ENCODE measurements at regions of chr22 and their contacts with region 1.

Region 1: DNA sequence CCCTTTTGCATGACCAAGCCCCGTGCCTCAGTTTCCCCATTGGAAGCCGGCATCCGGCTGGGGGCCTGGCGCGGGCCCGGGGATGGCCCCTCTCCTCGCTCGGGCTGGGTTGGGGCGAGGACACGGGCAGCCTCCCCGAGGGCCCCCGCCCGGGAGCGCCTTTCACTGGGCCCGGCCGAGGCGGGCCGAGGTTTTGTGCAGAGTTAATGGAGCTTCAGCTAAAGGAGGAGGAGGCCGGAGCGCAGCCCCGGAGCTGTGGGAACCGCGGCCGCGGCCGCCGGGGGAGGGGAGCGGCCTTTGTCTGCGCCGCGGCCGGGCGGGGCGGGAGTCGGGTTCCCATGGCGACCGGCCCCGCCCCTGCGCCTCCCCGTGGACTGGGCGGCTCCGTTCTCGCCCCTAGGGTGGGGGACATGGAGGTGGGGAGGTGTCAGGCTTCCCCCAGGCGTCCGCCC is 1.4 kb upstream of the MAPK11 start:
- DNase-seq: peak; percentile 80 to 84 (median 83)
- ATAC-seq: peak; percentile 82
- H3K4me3 ChIP-seq: peak overlapping the region; percentile 31
- H3K27ac ChIP-seq: no peak overlapping the region
- H3K4me1 ChIP-seq: peaks cover 7 to 77% of the 10 kb centered on the region in 2 experiments; a peak in 4 of 5 replicates
- H3K27me3 ChIP-seq: no peaks in the 10 kb centered on the region
- CTCF ChIP-seq: peak in 2 of 3 experiments; percentile 26 to 36; a peak in 3 of 6 replicates
- EP300 ChIP-seq: no peak
- POLR2A ChIP-seq: no peak
- RAD21 ChIP-seq: no peak

Region 2: DNA sequence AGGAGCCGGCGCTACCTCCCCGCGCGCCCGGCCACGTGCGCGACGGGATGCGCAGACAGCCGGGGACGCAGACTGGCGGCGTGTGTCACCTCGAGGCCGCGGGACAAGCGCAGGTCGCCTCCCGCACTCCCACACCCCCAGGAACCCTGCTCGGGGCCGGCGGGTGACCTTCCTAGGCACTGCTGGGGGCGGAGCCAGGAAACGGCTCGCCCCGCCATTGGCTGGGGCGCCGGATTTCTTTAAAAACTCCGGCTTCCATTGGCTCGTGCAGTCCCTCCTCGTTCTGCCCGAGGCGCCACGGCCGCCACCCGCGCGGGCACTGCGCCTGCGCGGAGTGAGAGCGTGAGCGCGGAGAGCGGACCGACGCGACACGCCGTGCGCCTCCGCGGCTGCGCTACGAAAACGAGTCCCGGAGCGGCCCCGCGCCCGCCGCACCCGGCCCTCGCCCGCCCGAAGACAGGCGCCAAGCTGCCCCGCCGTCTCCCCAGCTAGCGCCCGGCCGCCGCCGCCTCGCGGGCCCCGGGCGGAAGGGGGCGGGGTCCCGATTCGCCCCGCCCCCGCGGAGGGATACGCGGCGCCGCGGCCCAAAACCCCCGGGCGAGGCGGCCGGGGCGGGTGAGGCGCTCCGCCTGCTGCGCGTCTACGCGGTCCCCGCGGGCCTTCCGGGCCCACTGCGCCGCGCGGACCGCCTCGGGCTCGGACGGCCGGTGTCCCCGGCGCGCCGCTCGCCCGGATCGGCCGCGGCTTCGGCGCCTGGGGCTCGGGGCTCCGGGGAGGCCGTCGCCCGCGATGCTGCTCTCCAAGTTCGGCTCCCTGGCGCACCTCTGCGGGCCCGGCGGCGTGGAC is 311.2 kb before region 1 on chr22 and contains the start of gene PIM3:
- CTCF ChIA-PET with region 1: no interaction called
- POLR2A ChIA-PET with region 1: no interaction called
- in situ Hi-C with region 1: no loop called
- intact Hi-C with region 1: no loop called
- DNase-seq: peak; percentile 89 to 96 (median 92)
- ATAC-seq: peak; percentile 87
- H3K4me3 ChIP-seq: peak within 1 kb of the TSS; percentile 76
- H3K27ac ChIP-seq: peak within 1 kb of the TSS; percentile 94
- H3K4me1 ChIP-seq: peaks cover 20 to 86% of the 10 kb centered on the region in 2 experiments
- H3K27me3 ChIP-seq: no peaks in the 10 kb centered on the region
- CTCF ChIP-seq: no peak
- EP300 ChIP-seq: no peak
- POLR2A ChIP-seq: peak; percentile 75
- RAD21 ChIP-seq: no peak
- polyA plus RNA-seq, gene PIM3: 0.24 to 0.57 TPM

Region 3: GRCh38 chr22:50293441-50294318 is 22.1 kb after region 1 on chr22:
- CTCF ChIA-PET with region 1: no interaction called
- POLR2A ChIA-PET with region 1: no interaction called
- in situ Hi-C with region 1: no loop called
- intact Hi-C with region 1: no loop called
- DNase-seq: no peak
- ATAC-seq: no peak
- H3K4me3 ChIP-seq: no peak overlapping the region
- H3K27ac ChIP-seq: no peak overlapping the region
- H3K4me1 ChIP-seq: peaks cover 0 to 37% of the 10 kb centered on the region in 2 experiments; a peak in 2 of 5 replicates
- H3K27me3 ChIP-seq: no peaks in the 10 kb centered on the region
- CTCF ChIP-seq: no peak
- EP300 ChIP-seq: no peak
- POLR2A ChIP-seq: no peak
- RAD21 ChIP-seq: no peak

Region 4: DNA sequence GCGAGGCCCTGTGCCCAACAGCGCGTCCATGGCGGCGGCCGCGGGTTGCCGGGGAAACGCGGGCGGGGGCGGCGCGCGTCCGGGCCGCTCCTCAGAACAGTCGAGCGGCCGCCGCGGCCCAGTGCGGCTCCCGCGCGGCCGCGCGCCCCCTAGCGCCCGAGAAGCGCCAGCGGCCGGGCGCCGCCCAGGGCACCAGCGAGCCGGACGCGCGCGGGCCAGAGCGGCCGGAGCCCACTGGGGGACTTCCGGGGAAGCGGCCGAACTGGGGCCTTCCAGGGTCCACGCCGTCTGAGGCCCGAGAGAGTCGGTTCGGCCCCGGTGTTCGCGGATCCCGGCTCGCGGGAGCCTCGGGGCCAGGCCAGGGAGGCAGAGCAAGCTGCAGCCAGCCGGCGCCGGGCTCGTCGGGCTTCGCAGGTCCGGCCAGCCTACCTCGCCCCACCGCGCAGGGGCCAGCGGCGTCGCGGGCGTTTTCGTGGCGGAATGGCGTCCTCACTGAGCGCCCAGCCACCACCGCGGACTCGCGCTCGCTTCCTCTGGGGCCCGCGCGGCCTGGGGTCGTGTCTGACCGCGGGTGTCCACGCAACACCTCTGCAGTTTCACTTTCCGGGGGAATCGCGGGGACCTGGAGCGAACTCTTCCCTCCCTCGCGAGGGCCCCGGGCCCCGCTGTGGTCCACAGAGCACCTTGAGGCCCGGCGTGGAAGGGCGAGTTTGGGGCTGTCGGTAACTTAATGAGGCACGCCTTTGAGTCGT is 55.6 kb after region 1 on chr22 and contains the start of gene DENND6B:
- CTCF ChIA-PET with region 1: interaction called, 4 read pairs
- POLR2A ChIA-PET with region 1: interaction called, 3 read pairs
- in situ Hi-C with region 1: loop called (anchors 5 kb)
- intact Hi-C with region 1: loop called (anchors 5 kb)
- DNase-seq: peak; percentile 76 to 82 (median 79)
- ATAC-seq: peak; percentile 87
- H3K4me3 ChIP-seq: peak within 1 kb of the TSS; percentile 60
- H3K27ac ChIP-seq: peak within 1 kb of the TSS; percentile 88
- H3K4me1 ChIP-seq: peaks cover 2 to 28% of the 10 kb centered on the region in 2 experiments; a peak in 4 of 5 replicates
- H3K27me3 ChIP-seq: no peaks in the 10 kb centered on the region
- CTCF ChIP-seq: peak in 2 of 3 experiments; percentile 54 to 70; a peak in 4 of 6 replicates
- EP300 ChIP-seq: no peak
- POLR2A ChIP-seq: peak; percentile 72
- RAD21 ChIP-seq: peak in 1 of 2 experiments; percentile 68; a peak in 2 of 4 replicates
- polyA plus RNA-seq, gene DENND6B: 0.07 to 0.31 TPM

Region 5: DNA sequence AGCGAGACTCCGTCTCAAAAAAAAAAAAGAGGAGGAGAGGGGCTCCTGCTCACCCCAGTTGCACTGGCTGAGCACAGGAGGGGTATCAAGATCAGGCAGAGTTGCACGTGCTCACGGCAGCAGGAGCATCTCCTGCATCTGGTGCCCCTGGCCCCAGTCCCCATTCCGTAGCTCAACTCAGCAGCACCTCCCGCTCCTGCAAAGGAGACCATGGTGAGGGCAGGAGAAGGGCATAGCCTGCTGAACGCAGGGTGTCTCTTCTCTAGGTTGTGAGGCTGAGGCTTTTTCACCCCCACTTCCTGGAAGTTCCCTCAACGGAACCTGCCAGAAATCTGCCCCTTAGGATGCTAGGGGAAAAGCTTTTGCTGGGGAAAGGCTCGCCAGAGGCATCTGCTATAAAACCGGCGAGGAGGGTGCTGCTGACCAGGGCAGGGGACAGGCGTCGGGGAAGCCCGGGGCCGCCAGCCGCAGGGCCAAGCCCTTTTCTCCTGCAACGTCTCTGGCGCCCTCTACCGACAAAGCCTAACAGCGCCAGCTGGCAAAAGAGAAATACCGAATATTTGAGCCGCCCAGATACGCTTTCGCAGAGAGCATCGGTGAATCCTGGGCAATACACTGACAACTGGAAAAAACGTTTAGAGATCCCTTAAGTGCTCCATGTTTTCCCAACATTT is 70.6 kb after region 1 on chr22:
- CTCF ChIA-PET with region 1: interaction called, 8 read pairs
- POLR2A ChIA-PET with region 1: no interaction called
- in situ Hi-C with region 1: no loop called
- intact Hi-C with region 1: loop called (anchors 2 kb)
- DNase-seq: peak; percentile 58 to 89 (median 64)
- ATAC-seq: peak; percentile 89
- H3K4me3 ChIP-seq: peak overlapping the region; percentile 77
- H3K27ac ChIP-seq: peak overlapping the region; percentile 86
- H3K4me1 ChIP-seq: peaks cover 3 to 56% of the 10 kb centered on the region in 2 experiments; a peak in 4 of 5 replicates
- H3K27me3 ChIP-seq: no peaks in the 10 kb centered on the region
- CTCF ChIP-seq: peak; percentile 86 to 95 (median 90)
- EP300 ChIP-seq: 0 out of 2 replicates have a peak, but pooled peaks have one; percentile 4
- POLR2A ChIP-seq: no peak
- RAD21 ChIP-seq: peak; percentile 75 to 83

Measured in K562 (cell line).